Caco-2 (cell line): ENCODE measurements at regions of chr5 and their contacts with region 1.

Region 1: DNA sequence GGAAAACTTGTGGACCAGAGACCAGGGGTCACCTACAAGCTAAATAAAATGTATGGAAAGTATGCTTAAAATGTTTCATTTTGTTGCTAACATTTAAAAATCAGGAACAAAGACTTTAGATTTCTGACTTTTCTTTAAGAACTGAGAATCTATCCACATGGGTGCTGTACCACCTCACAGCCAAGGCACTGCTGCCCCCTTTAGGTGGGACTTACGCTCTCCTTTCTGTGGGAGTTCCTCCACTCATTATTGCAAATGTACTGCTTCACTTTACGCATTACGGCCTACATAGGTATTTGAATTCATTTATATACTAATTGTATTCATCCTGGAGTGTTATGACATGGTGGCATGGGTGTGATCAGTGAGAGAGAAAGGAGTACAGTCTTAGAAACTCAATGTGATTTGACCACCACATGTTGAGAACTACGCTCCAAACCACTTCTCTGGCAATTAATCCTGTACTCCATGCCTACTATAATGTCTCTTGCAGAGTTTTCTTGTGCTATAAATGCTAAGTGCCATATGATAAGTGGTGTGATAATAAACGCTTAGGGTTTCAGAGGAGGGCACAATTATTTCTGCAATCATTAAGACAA is 24.7 kb upstream of the CETN3 start:
- DNase-seq: peak; percentile 55 to 77
- H3K4me3 ChIP-seq: no peak overlapping the region
- H3K4me3 Mint-ChIP-seq: no peak overlapping the region
- H3K27ac Mint-ChIP-seq: no peak overlapping the region
- H3K4me1 ChIP-seq: peaks cover 5% of the 10 kb centered on the region; the same call in 1 of the 2 replicates
- H3K4me1 Mint-ChIP-seq: peaks cover 6% of the 10 kb centered on the region
- H3K27me3 ChIP-seq: no peaks in the 10 kb centered on the region
- H3K27me3 Mint-ChIP-seq: peaks cover 10% of the 10 kb centered on the region
- CTCF ChIP-seq: peak; percentile 73 to 86

Region 2: GRCh38 chr5:90395009-90395408 is 39.2 kb before region 1 on chr5:
- CTCF ChIA-PET with region 1: no interaction called
- POLR2A ChIA-PET with region 1: no interaction called
- intact Hi-C with region 1: no loop called
- DNase-seq: no peak
- H3K4me3 ChIP-seq: no peak overlapping the region
- H3K4me3 Mint-ChIP-seq: no peak overlapping the region
- H3K27ac Mint-ChIP-seq: no peak overlapping the region
- H3K4me1 ChIP-seq: no peaks in the 10 kb centered on the region
- H3K4me1 Mint-ChIP-seq: peaks cover 12% of the 10 kb centered on the region
- H3K27me3 ChIP-seq: no peaks in the 10 kb centered on the region
- H3K27me3 Mint-ChIP-seq: no peaks in the 10 kb centered on the region
- CTCF ChIP-seq: no peak

Region 3: DNA sequence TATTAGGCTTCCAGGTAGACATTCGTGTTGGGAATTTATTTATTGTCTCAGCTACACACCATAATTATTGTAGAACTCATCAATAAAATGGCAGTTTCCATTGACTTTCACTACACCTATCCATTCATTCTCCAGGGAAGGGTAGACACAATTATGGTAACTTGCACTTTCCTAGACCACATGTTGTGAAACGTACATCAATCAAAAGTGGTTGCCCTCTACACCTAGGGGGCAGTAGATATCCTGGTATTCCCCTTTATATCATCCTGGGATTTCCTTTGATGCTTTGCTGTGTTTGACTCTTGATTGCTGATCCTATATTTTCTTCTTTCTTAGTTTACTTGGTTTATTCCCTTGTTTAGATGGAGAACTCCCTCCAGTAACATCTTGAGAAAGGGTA is 172.3 kb after region 1 on chr5:
- CTCF ChIA-PET with region 1: interaction called, 15 read pairs
- POLR2A ChIA-PET with region 1: no interaction called
- intact Hi-C with region 1: loop called (anchors 1 kb)
- DNase-seq: peak in 1 of 2 experiments; percentile 5
- H3K4me3 ChIP-seq: no peak overlapping the region
- H3K4me3 Mint-ChIP-seq: no peak overlapping the region
- H3K27ac Mint-ChIP-seq: no peak overlapping the region
- H3K4me1 ChIP-seq: no peaks in the 10 kb centered on the region
- H3K4me1 Mint-ChIP-seq: peaks cover 6% of the 10 kb centered on the region
- H3K27me3 ChIP-seq: no peaks in the 10 kb centered on the region; the same call in 1 of the 2 replicates
- H3K27me3 Mint-ChIP-seq: peaks cover 9% of the 10 kb centered on the region
- CTCF ChIP-seq: peak; percentile 37 to 52

Region 4: GRCh38 chr5:90655423-90655822 is 221.2 kb after region 1 on chr5:
- CTCF ChIA-PET with region 1: no interaction called
- POLR2A ChIA-PET with region 1: no interaction called
- intact Hi-C with region 1: no loop called
- DNase-seq: no peak
- H3K4me3 ChIP-seq: no peak overlapping the region
- H3K4me3 Mint-ChIP-seq: no peak overlapping the region
- H3K27ac Mint-ChIP-seq: no peak overlapping the region
- H3K4me1 ChIP-seq: no peaks in the 10 kb centered on the region
- H3K4me1 Mint-ChIP-seq: no peaks in the 10 kb centered on the region
- H3K27me3 ChIP-seq: no peaks in the 10 kb centered on the region
- H3K27me3 Mint-ChIP-seq: no peaks in the 10 kb centered on the region
- CTCF ChIP-seq: no peak